ENCODE measurements at regions of chr19 and their contacts with region 1.

Region 1: GRCh38 chr19:18521885-18522624 is at the start of gene ELL:
- DNase-seq: peak; percentile 100
- H3K4me3 Mint-ChIP-seq: peak within 1 kb of the TSS; percentile 90
- H3K27ac Mint-ChIP-seq: peak within 1 kb of the TSS; percentile 92
- H3K4me1 Mint-ChIP-seq: peaks cover 16% of the 10 kb centered on the region
- H3K27me3 Mint-ChIP-seq: no peaks in the 10 kb centered on the region
- total RNA-seq, gene ELL: 24.7 to 29.7 TPM

Region 2: GRCh38 chr19:18457483-18458331 is 64.3 kb before region 1 on chr19:
- CTCF ChIA-PET with region 1: interaction called, 13 read pairs
- POLR2A ChIA-PET with region 1: no interaction called
- intact Hi-C with region 1: no loop called
- DNase-seq: no peak
- H3K4me3 Mint-ChIP-seq: no peak overlapping the region
- H3K27ac Mint-ChIP-seq: no peak overlapping the region
- H3K4me1 Mint-ChIP-seq: peaks cover 2% of the 10 kb centered on the region
- H3K27me3 Mint-ChIP-seq: no peaks in the 10 kb centered on the region

Region 3: GRCh38 chr19:18488838-18489626 is 33.0 kb before region 1 on chr19:
- CTCF ChIA-PET with region 1: interaction called, 16 read pairs
- POLR2A ChIA-PET with region 1: interaction called, 3 read pairs
- intact Hi-C with region 1: no loop called
- DNase-seq: no peak
- H3K4me3 Mint-ChIP-seq: no peak overlapping the region
- H3K27ac Mint-ChIP-seq: no peak overlapping the region
- H3K4me1 Mint-ChIP-seq: peaks cover 65% of the 10 kb centered on the region
- H3K27me3 Mint-ChIP-seq: no peaks in the 10 kb centered on the region

Region 4: DNA sequence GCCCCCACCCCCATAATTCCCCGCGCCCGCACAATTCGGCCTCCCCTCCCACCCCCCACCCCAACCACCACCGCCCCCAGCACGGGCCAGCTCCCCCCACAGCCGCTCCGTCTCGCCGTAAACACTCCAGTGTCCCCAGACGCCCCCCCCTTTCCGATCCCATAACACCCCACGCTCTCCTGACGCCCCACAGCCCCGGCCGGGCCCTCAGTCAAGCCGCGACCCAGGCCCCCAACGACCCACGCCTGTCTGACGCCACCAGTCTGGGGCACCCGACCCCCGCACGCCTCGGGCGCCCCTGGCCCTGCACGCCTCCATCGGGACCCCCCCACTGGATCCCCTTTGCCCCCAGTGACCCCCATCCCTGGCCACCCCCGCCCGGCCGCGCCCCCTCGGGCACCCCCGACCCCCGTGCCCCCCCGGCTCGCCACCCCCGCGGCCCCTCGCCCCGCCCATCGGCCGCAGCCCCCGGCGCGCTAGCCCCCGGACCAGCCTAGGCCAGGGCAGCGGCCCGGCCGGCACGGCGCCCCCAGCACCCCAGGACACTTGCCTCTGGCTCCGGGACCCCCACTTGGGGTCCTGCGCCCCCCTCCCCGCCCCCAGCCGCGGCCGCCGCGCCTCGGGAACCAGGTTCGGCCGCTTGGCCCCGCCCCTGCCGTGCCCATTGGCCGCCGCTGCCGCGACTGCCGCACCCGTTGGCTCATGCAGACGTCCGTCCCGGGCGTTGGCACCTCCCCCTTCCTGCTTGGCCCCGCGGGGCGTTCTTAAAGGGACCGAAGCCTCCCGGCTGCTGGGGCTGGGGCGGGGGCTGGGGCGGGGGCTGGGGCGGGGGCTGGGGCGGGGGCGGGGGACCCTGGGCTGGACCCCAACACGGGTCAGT is 21.1 kb after region 1 on chr19 and contains the start of gene FKBP8:
- CTCF ChIA-PET with region 1: interaction called, 16 read pairs
- POLR2A ChIA-PET with region 1: interaction called, 10 read pairs
- intact Hi-C with region 1: loop called (anchors 1 kb)
- DNase-seq: peak; percentile 97
- H3K4me3 Mint-ChIP-seq: peak within 1 kb of the TSS; percentile 89
- H3K27ac Mint-ChIP-seq: peak within 1 kb of the TSS; percentile 98
- H3K4me1 Mint-ChIP-seq: peaks cover 23% of the 10 kb centered on the region
- H3K27me3 Mint-ChIP-seq: no peaks in the 10 kb centered on the region
- total RNA-seq, gene FKBP8: 232 to 236 TPM

Region 5: GRCh38 chr19:18588611-18589379 is 66.7 kb after region 1 on chr19 and contains the start of gene REX1BD:
- CTCF ChIA-PET with region 1: interaction called, 42 read pairs
- POLR2A ChIA-PET with region 1: interaction called, 17 read pairs
- intact Hi-C with region 1: loop called (anchors 1 kb)
- DNase-seq: peak; percentile 88
- H3K4me3 Mint-ChIP-seq: peak within 1 kb of the TSS; percentile 82
- H3K27ac Mint-ChIP-seq: peak within 1 kb of the TSS; percentile 81
- H3K4me1 Mint-ChIP-seq: peaks cover 34% of the 10 kb centered on the region
- H3K27me3 Mint-ChIP-seq: no peaks in the 10 kb centered on the region
- total RNA-seq, gene REX1BD: 97.6 to 99.3 TPM

Region 6: GRCh38 chr19:18663940-18664530 is 142.0 kb after region 1 on chr19:
- CTCF ChIA-PET with region 1: no interaction called
- POLR2A ChIA-PET with region 1: no interaction called
- intact Hi-C with region 1: no loop called
- DNase-seq: no peak
- H3K4me3 Mint-ChIP-seq: no peak overlapping the region
- H3K27ac Mint-ChIP-seq: no peak overlapping the region
- H3K4me1 Mint-ChIP-seq: no peaks in the 10 kb centered on the region
- H3K27me3 Mint-ChIP-seq: no peaks in the 10 kb centered on the region

Region 7: GRCh38 chr19:18700501-18701249 is 178.6 kb after region 1 on chr19:
- CTCF ChIA-PET with region 1: no interaction called
- POLR2A ChIA-PET with region 1: no interaction called
- intact Hi-C with region 1: no loop called
- DNase-seq: peak; percentile 76
- H3K4me3 Mint-ChIP-seq: peak overlapping the region; percentile 55
- H3K27ac Mint-ChIP-seq: peak overlapping the region; percentile 28
- H3K4me1 Mint-ChIP-seq: peaks cover 31% of the 10 kb centered on the region
- H3K27me3 Mint-ChIP-seq: no peaks in the 10 kb centered on the region

Region 8: DNA sequence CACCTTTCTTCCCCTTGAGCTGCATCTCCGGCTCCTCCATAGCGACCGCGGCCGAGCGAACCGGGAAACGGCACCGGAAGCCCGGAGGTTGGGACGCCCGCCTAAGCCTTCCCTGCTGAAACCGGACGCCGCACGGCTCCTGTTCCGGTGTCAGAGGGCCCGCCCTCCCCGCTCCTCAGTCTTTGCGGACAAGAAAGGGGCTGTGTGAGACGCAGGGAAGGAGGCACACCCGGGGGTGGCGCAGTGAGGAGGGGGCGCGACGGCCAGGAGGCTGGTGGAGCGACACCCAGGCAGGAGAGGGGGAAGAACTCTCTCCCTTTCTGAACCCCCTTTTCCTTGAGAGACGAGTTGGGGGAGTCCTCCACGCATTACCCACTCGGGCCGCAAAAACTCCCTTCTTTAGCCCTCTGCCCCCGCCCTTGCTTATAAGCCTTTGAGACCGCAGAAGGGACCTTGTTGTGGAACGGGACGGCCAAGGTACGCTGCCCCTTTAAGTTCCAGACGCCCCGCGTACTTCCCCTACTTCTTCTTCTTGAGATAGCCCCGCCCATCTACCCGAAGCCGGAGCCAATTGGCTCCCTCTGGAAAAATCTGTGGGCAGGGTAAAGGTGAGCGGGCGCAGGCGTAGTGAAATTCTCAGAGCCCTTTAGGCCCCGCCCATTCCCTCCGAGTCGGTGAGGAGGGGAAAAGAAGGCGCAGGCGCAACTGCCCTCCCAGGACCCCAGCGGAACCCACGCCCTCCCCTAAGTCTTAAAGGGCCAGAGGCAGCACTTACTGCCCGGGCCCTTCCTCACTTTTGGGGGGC is 670.2 kb after region 1 on chr19 and contains the starts of genes BORCS8 and RFXANK:
- CTCF ChIA-PET with region 1: no interaction called
- POLR2A ChIA-PET with region 1: no interaction called
- intact Hi-C with region 1: loop called (anchors 1 kb)
- DNase-seq: peak; percentile 100
- H3K4me3 Mint-ChIP-seq: peak within 1 kb of the TSS; percentile 96
- H3K27ac Mint-ChIP-seq: peak within 1 kb of the TSS; percentile 96
- H3K4me1 Mint-ChIP-seq: peaks cover 38% of the 10 kb centered on the region
- H3K27me3 Mint-ChIP-seq: no peaks in the 10 kb centered on the region
- total RNA-seq, gene BORCS8: 16.4 to 17.8 TPM
- total RNA-seq, gene RFXANK: 73.7 to 78.1 TPM